Left colon (tissue), 2 donors: ENCODE measurements at regions of chr3 and their contacts with region 1.

Region 1: DNA sequence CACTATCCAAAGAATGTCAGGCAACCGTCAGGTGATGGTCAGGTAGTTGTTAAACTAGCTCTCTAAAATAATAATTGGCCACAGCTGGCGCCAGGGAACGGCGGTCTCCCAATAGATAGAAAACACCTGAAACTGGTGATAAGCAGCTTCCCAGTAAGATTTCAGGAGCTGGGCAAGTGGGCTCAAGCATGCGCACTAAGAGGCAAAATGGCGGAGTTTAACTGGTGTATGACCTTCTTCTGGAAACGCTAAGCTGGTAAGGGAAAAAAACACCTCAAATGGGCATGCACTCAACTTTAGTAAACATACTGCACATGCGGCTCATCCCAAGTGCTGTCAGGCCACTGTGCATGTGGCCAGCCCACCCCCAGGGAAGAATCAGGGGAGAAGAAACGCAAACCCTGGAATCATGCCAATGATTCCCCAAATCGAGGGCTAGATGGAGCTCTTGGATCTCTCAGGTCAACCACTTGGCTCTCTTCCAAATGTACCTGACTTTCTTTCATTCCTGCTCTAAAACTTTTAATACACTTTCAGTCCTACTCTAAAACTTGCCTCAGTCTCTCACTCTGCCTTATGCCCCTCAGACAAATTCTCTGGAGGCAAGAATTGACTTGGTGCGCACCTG is 195.0 kb downstream of the ZNF621 start:
- DNase-seq: no peak
- ATAC-seq: peak; percentile 59

Region 2: GRCh38 chr3:41434781-41435180 is 715.0 kb after region 1 on chr3:
- intact Hi-C with region 1: no loop called
- DNase-seq: no peak
- ATAC-seq: no peak

Region 3: DNA sequence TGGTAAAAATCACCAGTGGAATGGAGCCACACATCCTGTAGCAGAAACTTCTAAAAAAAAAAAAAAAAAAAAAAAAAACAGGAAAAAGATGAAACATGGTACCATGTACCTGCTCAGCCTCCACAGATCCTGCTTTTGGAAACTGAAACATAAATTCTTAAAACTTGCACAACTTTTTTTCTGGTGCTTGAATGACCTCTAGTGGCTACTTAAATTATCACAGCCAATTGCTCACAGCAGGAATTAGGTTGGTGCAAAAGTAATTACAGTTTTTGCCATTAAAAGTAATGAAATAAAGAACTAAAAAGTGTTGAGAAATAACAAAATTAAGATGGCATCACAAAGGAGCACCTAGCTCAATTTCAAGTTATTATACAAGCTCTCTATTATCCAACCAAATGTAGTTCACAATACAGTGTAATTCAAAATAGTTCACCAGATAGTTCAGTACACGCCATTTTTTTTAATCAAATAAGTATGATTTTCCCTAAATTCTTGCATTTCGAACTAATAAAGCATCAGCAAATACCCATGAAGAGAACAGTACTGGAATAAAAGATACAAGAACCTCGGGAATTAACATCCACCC is 1161.6 kb after region 1 on chr3:
- intact Hi-C with region 1: loop called in 1 of 2 experiments (anchors 10 kb)
- DNase-seq: no peak
- ATAC-seq: no peak